Naive thymus-derived CD4-positive, alpha-beta T cell (primary cell): ENCODE measurements at regions of chr16 and their contacts with region 1.

Region 1: GRCh38 chr16:89560378-89561141 is at the start of gene RPL13:
- DNase-seq: peak; percentile 79 to 95 (median 92)
- ATAC-seq: peak; percentile 96
- H3K4me3 ChIP-seq: peak within 1 kb of the TSS; percentile 97
- H3K4me3 Mint-ChIP-seq: peak within 1 kb of the TSS; percentile 85 to 99 (median 96)
- H3K27ac ChIP-seq: peak within 1 kb of the TSS; percentile 87
- H3K27ac Mint-ChIP-seq: peak within 1 kb of the TSS; percentile 92 to 99 (median 98)
- H3K4me1 ChIP-seq: peaks cover 24 to 42% of the 10 kb centered on the region in 2 donors
- H3K4me1 Mint-ChIP-seq: peaks cover 33 to 63% (median 55%) of the 10 kb centered on the region in 7 donors
- H3K27me3 ChIP-seq: no peaks in the 10 kb centered on the region
- H3K27me3 Mint-ChIP-seq: no peaks in the 10 kb centered on the region
- total RNA-seq, gene RPL13: 2,239 to 5,631 (median 5,332) TPM

Region 2: DNA sequence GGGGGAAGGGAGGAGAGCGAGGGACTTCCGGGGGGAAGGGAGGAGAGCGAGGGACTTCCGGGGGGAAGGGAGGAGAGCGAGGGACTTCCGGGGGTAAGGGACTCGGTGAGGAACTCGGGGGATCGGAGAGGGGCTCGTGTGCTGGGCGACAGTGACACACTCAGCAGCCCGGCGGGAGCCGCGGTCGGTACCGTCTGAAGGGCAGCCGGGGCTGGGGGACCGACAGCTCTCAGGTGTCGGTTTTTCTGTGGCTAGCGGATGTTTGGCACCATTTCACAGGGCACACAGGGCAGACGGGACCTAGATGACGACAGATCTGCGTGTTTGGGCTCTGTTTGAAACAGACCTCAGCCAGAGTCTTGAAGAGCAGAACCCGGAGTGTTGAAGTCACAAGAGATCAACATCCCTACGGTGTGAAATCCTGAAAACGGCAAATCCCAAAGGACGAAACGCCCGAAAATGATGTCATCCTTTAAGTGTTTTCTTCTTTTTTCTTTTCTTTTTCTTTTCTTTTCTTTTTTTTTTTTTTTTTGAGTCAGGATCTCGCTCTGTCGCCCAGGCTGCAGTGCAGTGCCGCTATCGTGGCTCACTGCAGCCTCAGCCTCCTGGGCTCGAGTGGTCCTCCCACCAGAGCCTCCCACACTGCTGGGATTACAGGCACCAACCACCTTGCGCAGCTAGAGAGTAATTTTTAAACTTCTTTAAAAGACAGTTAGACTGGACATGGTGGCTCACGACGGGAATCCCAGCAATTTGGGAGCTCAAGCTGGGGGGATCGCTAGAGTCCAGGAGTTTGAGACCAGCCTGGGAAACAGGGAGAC is 319.2 kb before region 1 on chr16:
- CTCF ChIA-PET with region 1: no interaction called
- POLR2A ChIA-PET with region 1: no interaction called
- intact Hi-C with region 1: loop called (anchors 1 to 2 kb)
- DNase-seq: peak; percentile 75 to 95 (median 93)
- ATAC-seq: peak; percentile 86
- H3K4me3 ChIP-seq: peak overlapping the region; percentile 68
- H3K4me3 Mint-ChIP-seq: peak overlapping the region; percentile 83 to 100 (median 96)
- H3K27ac ChIP-seq: peak overlapping the region; percentile 91
- H3K27ac Mint-ChIP-seq: peak overlapping the region; percentile 94 to 100 (median 99)
- H3K4me1 ChIP-seq: peaks cover 5 to 6% of the 10 kb centered on the region in 2 donors
- H3K4me1 Mint-ChIP-seq: peaks cover 0 to 31% (median 18%) of the 10 kb centered on the region in 7 donors
- H3K27me3 ChIP-seq: no peaks in the 10 kb centered on the region
- H3K27me3 Mint-ChIP-seq: no peaks in the 10 kb centered on the region

Region 3: DNA sequence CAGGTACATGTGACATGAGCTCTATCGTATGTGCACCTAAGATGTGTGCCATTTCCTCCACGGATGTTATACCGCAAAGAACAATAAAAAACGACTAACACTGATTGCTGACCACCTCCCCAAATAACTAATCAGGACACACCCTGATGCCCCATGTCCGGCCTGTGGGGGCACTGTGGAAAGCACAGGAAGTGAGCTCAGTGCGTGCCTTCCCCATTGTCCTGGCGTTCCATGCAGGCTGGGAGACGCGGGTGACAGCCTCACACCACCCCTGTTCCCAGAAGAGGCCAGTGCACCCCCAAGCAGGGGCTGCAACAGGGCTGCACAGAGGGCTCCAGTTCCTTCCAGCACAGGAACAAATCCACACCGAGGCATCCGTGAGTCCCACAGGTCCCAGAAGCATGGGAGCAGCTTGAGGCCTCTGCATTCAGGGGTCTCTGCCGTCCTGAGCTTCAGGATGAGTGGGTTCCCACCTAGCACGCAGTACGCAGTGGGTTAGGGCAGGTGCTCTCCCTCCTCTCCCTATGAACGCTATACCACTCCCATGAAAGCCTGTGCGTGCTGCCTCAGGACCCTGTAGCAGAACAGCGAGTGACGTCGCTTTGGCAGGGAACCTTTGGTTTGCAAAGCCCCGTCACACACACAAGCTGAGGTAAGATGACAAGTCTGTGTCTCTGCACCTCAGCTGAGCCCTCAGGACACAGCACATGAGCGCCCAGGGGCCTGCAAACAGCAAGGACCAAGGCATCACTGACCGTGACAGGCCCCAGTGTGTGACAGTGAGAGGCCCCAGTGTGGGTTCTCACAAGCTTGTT is 225.4 kb before region 1 on chr16:
- CTCF ChIA-PET with region 1: interaction called, 5 read pairs
- POLR2A ChIA-PET with region 1: no interaction called
- intact Hi-C with region 1: loop called (anchors 1 kb)
- DNase-seq: no peak
- ATAC-seq: no peak
- H3K4me3 ChIP-seq: no peak overlapping the region
- H3K4me3 Mint-ChIP-seq: peak overlapping the region in 7 of 10 donors; percentile 28 to 75 (median 57)
- H3K27ac ChIP-seq: peak overlapping the region; percentile 32
- H3K27ac Mint-ChIP-seq: peak overlapping the region in 8 of 9 donors; percentile 13 to 90 (median 68)
- H3K4me1 ChIP-seq: peaks cover 42 to 64% of the 10 kb centered on the region in 2 donors
- H3K4me1 Mint-ChIP-seq: peaks cover 57 to 87% (median 74%) of the 10 kb centered on the region in 7 donors
- H3K27me3 ChIP-seq: no peaks in the 10 kb centered on the region
- H3K27me3 Mint-ChIP-seq: no peaks in the 10 kb centered on the region

Region 4: GRCh38 chr16:89436366-89436765 is 124.2 kb before region 1 on chr16:
- CTCF ChIA-PET with region 1: no interaction called
- POLR2A ChIA-PET with region 1: no interaction called
- intact Hi-C with region 1: no loop called
- DNase-seq: no peak
- ATAC-seq: no peak
- H3K4me3 ChIP-seq: peak overlapping the region; percentile 36
- H3K4me3 Mint-ChIP-seq: peak overlapping the region in 7 of 10 donors; percentile 24 to 93 (median 83)
- H3K27ac ChIP-seq: peak overlapping the region; percentile 43
- H3K27ac Mint-ChIP-seq: peak overlapping the region in 7 of 9 donors; percentile 82 to 95 (median 93)
- H3K4me1 ChIP-seq: peaks cover 74 to 96% of the 10 kb centered on the region in 2 donors
- H3K4me1 Mint-ChIP-seq: peaks cover 0 to 67% (median 28%) of the 10 kb centered on the region in 7 donors
- H3K27me3 ChIP-seq: no peaks in the 10 kb centered on the region
- H3K27me3 Mint-ChIP-seq: no peaks in the 10 kb centered on the region

Region 5: GRCh38 chr16:89534252-89534756 is 26.3 kb before region 1 on chr16:
- CTCF ChIA-PET with region 1: interaction called, 4 read pairs
- POLR2A ChIA-PET with region 1: interaction called, 8 read pairs
- intact Hi-C with region 1: loop called (anchors 1 to 2 kb)
- DNase-seq: peak in 7 of 9 donors; percentile 60 to 80 (median 74)
- ATAC-seq: peak; percentile 96
- H3K4me3 ChIP-seq: peak overlapping the region; percentile 5
- H3K4me3 Mint-ChIP-seq: peak overlapping the region; percentile 57 to 83 (median 72)
- H3K27ac ChIP-seq: peak overlapping the region; percentile 49
- H3K27ac Mint-ChIP-seq: peak overlapping the region; percentile 91 to 100 (median 94)
- H3K4me1 ChIP-seq: peaks cover 9 to 22% of the 10 kb centered on the region in 2 donors
- H3K4me1 Mint-ChIP-seq: peaks cover 17 to 27% (median 24%) of the 10 kb centered on the region in 7 donors
- H3K27me3 ChIP-seq: no peaks in the 10 kb centered on the region
- H3K27me3 Mint-ChIP-seq: no peaks in the 10 kb centered on the region

Region 6: DNA sequence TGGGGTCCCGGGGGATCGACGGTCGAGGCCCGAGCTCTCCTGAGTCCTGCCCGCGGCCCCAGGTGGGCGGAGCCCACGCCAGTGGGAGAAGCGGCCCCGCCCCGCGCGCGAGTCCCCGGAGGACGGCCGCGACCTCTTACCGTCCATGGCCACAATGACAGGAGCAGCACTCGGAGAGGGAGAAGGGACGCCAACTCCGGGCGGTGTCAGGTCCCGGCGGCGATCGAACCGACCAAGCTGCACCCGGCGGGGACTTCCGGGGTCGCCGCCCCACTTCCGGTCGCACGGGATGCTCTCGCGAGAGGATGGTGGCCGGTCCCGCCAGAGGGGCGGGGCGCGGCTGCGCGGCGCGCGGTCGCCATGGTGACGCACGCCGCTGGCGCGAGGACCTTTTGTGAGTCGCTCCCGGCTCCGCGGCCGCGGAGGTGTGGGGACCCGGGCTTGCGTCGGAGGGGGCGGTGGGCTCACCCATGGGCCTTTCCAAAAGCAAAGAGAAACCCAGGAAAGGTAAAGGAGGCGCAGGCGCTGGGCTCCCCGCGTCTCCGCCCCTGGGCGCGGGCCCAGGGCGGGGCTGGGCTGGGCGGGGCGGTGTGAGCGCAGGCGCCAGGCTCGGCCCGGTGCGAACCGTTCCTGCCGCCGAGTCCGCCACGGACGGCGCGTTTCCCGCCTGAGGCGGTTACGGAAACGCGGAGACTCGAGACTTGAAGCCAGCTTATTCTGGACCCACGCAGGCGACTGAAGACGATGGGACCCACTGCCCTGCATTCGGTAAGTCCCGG is 97.1 kb after region 1 on chr16 and contains the starts of genes CHMP1A and SPATA33:
- CTCF ChIA-PET with region 1: no interaction called
- POLR2A ChIA-PET with region 1: no interaction called
- intact Hi-C with region 1: loop called (anchors 1 to 2 kb)
- DNase-seq: peak; percentile 87 to 98 (median 94)
- ATAC-seq: peak; percentile 95
- H3K4me3 ChIP-seq: peak within 1 kb of the TSS; percentile 88
- H3K4me3 Mint-ChIP-seq: peak within 1 kb of the TSS; percentile 82 to 93 (median 86)
- H3K27ac ChIP-seq: peak within 1 kb of the TSS; percentile 85
- H3K27ac Mint-ChIP-seq: peak within 1 kb of the TSS; percentile 71 to 89 (median 85)
- H3K4me1 ChIP-seq: peaks cover 6 to 16% of the 10 kb centered on the region in 2 donors
- H3K4me1 Mint-ChIP-seq: peaks cover 17 to 44% (median 36%) of the 10 kb centered on the region in 7 donors
- H3K27me3 ChIP-seq: no peaks in the 10 kb centered on the region
- H3K27me3 Mint-ChIP-seq: no peaks in the 10 kb centered on the region
- total RNA-seq, gene CHMP1A: 64.4 to 99.0 (median 65.9) TPM
- total RNA-seq, gene SPATA33: 6.4 to 17.0 (median 7.9) TPM

Region 7: DNA sequence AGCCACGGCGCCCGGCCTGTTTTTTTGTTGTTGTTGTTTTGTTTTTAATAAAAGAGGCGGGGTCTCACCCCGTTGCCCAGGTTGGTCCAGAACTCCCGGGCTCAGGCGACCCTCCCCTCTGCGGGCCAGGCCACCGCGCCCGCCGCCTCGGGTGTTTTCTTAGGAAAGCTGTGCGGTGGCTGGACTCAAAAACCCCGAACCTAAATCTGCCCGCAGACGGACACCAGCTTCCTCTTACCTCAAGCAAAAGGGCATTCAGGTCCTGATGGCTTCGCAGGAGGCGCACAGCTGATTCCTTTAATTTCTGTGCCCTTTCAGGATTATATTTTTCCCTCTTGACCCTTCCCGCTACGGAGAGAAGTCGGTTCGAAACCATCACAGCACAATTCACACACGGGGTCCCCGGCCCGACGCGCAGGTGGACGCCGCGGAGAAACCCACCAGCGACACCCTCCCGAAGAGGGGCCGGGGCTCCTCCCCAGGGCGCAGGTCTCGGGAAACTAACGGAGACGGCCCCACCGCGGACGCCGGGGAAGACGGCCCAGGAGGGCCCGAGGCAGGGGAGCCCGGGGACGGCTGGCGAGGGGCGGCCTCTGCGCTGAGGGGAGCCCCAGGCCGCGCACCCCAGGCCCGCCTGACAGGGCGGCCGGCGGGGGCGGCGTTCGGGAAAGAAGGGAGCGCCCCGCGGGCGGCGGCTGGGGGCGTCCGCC is 255.2 kb after region 1 on chr16:
- CTCF ChIA-PET with region 1: no interaction called
- POLR2A ChIA-PET with region 1: no interaction called
- intact Hi-C with region 1: loop called in 1 of 2 experiments (anchors 1 kb)
- DNase-seq: no peak
- ATAC-seq: peak; percentile 14
- H3K4me3 ChIP-seq: peak overlapping the region; percentile 37
- H3K4me3 Mint-ChIP-seq: peak overlapping the region; percentile 68 to 89 (median 80)
- H3K27ac ChIP-seq: peak overlapping the region; percentile 13
- H3K27ac Mint-ChIP-seq: peak overlapping the region in 1 of 9 donors; percentile 66
- H3K4me1 ChIP-seq: peaks cover 3 to 4% of the 10 kb centered on the region in 2 donors
- H3K4me1 Mint-ChIP-seq: peaks cover 10 to 29% (median 20%) of the 10 kb centered on the region in 7 donors
- H3K27me3 ChIP-seq: no peaks in the 10 kb centered on the region
- H3K27me3 Mint-ChIP-seq: no peaks in the 10 kb centered on the region

Region 8: DNA sequence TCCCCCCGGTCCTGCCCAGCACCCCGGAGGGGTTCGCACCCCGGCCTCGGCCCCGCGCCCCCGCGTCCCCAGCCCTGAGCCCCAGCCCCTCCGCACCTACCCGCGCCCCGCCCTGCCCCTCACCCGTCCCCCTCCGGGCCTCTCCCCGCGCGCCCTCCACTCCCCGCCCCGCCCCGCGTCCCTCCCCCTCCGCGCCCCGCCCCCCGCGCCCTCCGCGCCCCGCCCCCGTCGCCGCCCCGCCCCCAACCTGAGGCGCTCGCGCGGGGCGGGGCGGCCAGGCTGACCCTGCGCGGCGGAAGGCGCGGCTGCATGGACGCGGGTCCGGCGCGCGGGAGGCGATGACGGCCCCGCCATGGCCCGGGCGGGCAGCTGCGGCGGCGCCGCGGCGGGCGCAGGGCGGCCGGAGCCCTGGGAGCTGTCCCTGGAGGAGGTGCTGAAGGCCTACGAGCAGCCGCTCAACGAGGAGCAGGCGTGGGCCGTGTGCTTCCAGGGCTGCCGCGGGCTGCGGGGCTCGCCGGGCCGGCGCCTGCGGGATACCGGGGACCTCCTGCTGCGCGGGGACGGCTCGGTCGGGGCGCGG is 267.7 kb after region 1 on chr16 and contains the start of gene SPIRE2:
- CTCF ChIA-PET with region 1: no interaction called
- POLR2A ChIA-PET with region 1: no interaction called
- intact Hi-C with region 1: no loop called
- DNase-seq: peak; percentile 54 to 86 (median 73)
- ATAC-seq: peak; percentile 99
- H3K4me3 ChIP-seq: no peak within 1 kb of the TSS
- H3K4me3 Mint-ChIP-seq: peak within 1 kb of the TSS in 9 of 10 donors; percentile 46 to 70 (median 62)
- H3K27ac ChIP-seq: no peak within 1 kb of the TSS
- H3K27ac Mint-ChIP-seq: peak within 1 kb of the TSS in 1 of 9 donors; percentile 32
- H3K4me1 ChIP-seq: no peaks in the 10 kb centered on the region
- H3K4me1 Mint-ChIP-seq: peaks cover 2 to 10% (median 5%) of the 10 kb centered on the region in 7 donors
- H3K27me3 ChIP-seq: peaks cover 0 to 10% of the 10 kb centered on the region in 2 donors
- H3K27me3 Mint-ChIP-seq: peaks cover 12 to 37% (median 24%) of the 10 kb centered on the region in 5 donors
- total RNA-seq, gene SPIRE2: 1.2 to 3.5 (median 3.0) TPM